Dorsolateral prefrontal cortex (tissue), 120 donors: ENCODE measurements at regions of chr19 and their contacts with region 1.

Region 1: GRCh38 chr19:12890787-12891552 is at the start of gene GCDH:
- DNase-seq: peak; percentile 93 to 99 (median 99)
- H3K4me3 ChIP-seq: peak within 1 kb of the TSS; percentile 63 to 100 (median 98)
- H3K27ac ChIP-seq: peak within 1 kb of the TSS in 52 of 59 donors; percentile 20 to 93 (median 77)
- H3K27me3 ChIP-seq: peaks cover 0 to 4% (median 0%) of the 10 kb centered on the region in 45 donors
- CTCF ChIP-seq: peak in 13 of 56 donors; percentile 5 to 47 (median 17)
- total RNA-seq, gene GCDH: 23.6 to 60.7 (median 37.1) TPM

Region 2: DNA sequence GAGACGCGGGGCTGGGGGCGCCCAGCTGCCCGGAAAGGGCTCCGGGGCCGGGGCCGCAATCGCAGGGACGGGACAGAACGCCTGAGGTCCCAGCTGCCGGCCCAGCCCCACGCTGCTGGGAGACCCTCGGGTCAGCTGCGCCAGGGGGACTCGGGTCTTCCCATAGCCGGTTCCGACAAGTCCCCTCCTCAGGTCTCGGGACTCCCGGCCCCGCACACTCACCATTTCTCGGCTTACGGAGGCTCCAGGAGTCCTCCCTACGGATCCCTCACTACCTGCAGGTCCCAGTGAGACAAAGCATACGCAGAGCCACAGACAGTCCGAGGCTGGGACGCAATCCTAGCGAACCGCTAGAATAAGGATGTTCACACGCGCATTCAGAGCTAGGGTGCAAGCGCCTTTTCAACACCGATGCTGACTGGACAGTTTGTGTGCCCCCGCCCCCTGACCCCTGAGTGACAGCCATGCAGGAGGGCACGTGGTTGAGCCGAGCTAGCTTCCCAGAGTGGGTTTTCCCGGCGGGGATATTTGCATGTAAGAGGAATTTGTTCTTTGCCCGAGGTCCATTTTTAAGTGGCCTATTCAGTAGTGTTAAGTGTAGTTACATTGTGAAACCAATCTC is 293.9 kb before region 1 on chr19:
- intact Hi-C with region 1: no loop called
- DNase-seq: peak in 4 of 10 donors; percentile 34 to 42 (median 38)
- H3K4me3 ChIP-seq: peak overlapping the region in 45 of 59 donors; percentile 1 to 54 (median 32)
- H3K27ac ChIP-seq: no peak overlapping the region
- H3K27me3 ChIP-seq: no peaks in the 10 kb centered on the region
- CTCF ChIP-seq: no peak

Region 3: GRCh38 chr19:12789904-12790619 is 100.9 kb before region 1 on chr19:
- intact Hi-C with region 1: no loop called
- DNase-seq: peak; percentile 91 to 99 (median 96)
- H3K4me3 ChIP-seq: peak overlapping the region; percentile 53 to 98 (median 89)
- H3K27ac ChIP-seq: peak overlapping the region; percentile 82 to 100 (median 98)
- H3K27me3 ChIP-seq: no peaks in the 10 kb centered on the region
- CTCF ChIP-seq: peak in 18 of 56 donors; percentile 7 to 35 (median 20)

Region 4: DNA sequence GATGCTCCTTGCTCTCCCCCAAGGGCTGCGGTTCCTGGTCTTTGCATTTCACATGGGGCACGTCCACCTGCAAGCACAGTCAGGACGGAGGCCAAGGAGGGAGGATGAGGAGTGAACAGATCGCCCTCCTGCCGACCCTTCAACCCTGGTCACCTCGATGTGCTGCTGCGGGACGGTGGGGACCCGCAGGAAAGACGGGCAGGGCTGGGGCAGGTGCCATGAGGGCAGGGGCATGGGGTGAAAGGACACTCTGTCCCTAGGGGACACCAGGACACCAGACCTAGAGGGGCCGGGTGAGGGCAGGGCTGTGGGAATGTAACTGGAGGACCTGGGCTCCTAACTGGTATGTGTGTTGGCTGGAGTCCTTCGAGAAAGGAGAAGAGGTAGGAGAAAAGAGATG is 27.3 kb after region 1 on chr19:
- intact Hi-C with region 1: loop called in 1 of 2 experiments (anchors 2 kb)
- DNase-seq: no peak
- H3K4me3 ChIP-seq: no peak overlapping the region
- H3K27ac ChIP-seq: no peak overlapping the region
- H3K27me3 ChIP-seq: no peaks in the 10 kb centered on the region
- CTCF ChIP-seq: no peak

Region 5: DNA sequence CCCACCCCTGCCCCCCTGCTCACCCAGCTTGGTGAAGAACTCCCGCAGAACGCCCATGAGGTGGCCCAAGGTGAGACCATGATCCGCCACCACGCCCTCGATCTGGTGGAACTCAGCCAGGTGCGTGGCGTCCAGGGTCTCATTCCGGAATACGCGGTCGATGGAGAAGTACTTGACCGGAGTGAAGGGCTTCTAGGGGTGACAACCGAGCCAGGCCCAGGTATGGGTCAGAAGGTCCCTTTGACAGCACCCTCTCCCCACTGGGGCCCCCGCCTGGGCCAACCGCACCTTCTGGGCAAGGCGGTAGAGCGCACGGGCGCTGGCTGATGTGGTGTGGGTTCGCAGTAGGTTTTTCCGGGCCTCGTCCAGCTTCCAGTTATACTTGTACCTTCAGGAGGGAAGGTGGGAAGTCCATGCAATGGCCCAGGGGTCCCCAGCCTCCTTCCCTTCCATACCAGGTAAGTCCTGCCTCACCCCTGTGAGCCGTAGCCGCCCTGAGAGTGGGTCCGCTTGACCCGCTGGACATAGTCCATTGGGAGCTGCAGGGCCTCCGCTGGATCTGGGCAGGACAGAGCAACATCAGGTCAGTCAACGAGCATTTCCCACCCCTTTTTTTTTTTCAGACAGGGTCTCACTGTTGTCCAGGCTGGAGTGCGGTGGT is 33.8 kb after region 1 on chr19:
- intact Hi-C with region 1: loop called (anchors 2 to 5 kb)
- DNase-seq: no peak
- H3K4me3 ChIP-seq: no peak overlapping the region
- H3K27ac ChIP-seq: no peak overlapping the region
- H3K27me3 ChIP-seq: no peaks in the 10 kb centered on the region
- CTCF ChIP-seq: no peak

Region 6: DNA sequence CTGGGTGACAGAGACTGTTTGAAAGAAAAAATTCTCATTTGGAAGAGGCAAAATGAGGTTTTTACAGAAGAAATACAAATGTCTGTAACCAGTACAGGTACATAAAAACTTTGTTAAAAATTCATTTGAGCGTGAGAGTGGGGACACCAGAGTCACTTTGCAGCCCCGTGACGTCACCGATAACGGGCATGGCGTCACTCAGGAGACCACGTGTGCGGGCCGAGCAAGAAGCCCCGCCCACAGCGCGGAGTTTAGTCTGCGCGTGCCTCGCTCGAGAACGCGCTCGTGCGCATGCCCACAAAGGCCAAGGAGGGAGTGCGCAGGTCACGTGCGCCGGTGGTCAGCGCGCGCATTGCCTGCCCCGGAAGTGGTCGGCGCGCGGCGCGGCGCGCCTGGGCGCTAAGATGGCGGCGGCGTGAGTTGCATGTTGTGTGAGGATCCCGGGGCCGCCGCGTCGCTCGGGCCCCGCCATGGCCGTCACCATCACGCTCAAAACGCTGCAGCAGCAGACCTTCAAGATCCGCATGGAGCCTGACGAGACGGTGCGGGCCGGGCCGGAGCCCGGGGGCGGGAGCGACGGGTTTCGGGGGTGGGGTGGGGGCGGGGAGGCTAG is 54.6 kb after region 1 on chr19 and contains the start of gene RAD23A:
- intact Hi-C with region 1: loop called in 1 of 2 experiments (anchors 5 kb)
- DNase-seq: peak; percentile 87 to 95 (median 92)
- H3K4me3 ChIP-seq: peak within 1 kb of the TSS; percentile 43 to 95 (median 87)
- H3K27ac ChIP-seq: peak within 1 kb of the TSS; percentile 61 to 96 (median 89)
- H3K27me3 ChIP-seq: no peaks in the 10 kb centered on the region
- CTCF ChIP-seq: peak in 27 of 56 donors; percentile 6 to 50 (median 30)
- total RNA-seq, gene RAD23A: 61.4 to 130 (median 95.7) TPM

Region 7: DNA sequence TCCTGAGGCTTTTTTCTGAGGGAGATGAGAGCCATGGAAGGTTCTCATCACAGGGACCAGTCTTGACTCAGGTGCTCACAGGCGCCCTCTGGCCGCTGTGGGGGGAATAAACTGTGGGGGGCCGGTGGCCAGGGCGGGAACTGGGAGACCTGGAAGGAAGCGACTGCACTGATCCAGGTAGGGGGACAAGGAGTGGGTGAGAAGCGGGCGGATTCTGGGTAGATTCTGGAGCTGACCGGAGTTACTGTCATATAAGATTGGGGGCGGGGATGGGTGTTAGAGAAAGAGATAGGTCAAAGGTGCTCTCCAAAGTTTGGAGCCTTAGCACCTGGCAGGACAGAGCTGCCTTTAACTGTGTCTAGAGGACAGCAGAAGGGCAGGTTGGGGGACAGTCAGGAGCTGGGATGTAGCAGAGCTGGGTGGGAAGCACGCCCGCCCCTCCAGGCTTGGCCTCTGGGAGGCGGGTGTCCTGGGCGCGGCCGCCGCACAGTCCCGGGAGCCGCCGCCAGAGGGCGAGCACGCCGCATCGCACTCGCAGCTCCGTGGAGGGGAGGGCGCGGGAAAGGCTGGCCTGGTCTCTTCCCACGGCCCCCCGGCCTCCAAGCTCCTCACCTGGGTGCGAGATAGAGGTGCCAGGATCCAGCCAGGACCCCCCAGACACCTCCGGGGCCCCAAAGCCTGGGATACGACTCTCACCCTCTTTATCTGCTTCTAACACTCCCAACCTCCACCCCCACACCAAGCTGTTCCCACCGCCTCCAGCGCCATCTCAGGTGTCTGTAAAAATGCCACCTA is 74.2 kb after region 1 on chr19:
- intact Hi-C with region 1: loop called in 1 of 2 experiments (anchors 2 kb)
- DNase-seq: peak in 9 of 10 donors; percentile 66 to 88 (median 76)
- H3K4me3 ChIP-seq: peak overlapping the region; percentile 33 to 73 (median 58)
- H3K27ac ChIP-seq: peak overlapping the region in 54 of 59 donors; percentile 4 to 84 (median 58)
- H3K27me3 ChIP-seq: no peaks in the 10 kb centered on the region
- CTCF ChIP-seq: peak; percentile 67 to 98 (median 92)